ENCODE measurements at regions of chr7 and their contacts with region 1.

Region 1: GRCh38 chr7:35801392-35802101 is 690 bp downstream of the SEPTIN7 start:
- DNase-seq: peak; percentile 25 to 41
- ATAC-seq: peak; percentile 39 to 53
- H3K4me3 ChIP-seq: peak overlapping the region; percentile 86 to 96 (median 90)
- H3K27ac ChIP-seq: peak overlapping the region; percentile 92 to 96 (median 94)
- H3K4me1 ChIP-seq: peaks cover 23 to 28% of the 10 kb centered on the region in 2 donors
- H3K27me3 ChIP-seq: no peaks in the 10 kb centered on the region
- CTCF ChIP-seq: peak in 3 of 5 experiments; percentile 34 to 66 (median 64)
- POLR2A ChIP-seq: no peak

Region 2: GRCh38 chr7:35694781-35695472 is 106.6 kb before region 1 on chr7 and contains the start of gene HERPUD2:
- in situ Hi-C with region 1: loop called in 1 of 4 experiments (anchors 25 kb)
- intact Hi-C with region 1: loop called (anchors 1 kb)
- DNase-seq: peak; percentile 92 to 93
- ATAC-seq: peak; percentile 95
- H3K4me3 ChIP-seq: peak within 1 kb of the TSS; percentile 68 to 97 (median 89)
- H3K27ac ChIP-seq: peak within 1 kb of the TSS; percentile 92 to 98 (median 96)
- H3K4me1 ChIP-seq: peaks cover 45 to 47% of the 10 kb centered on the region in 2 donors
- H3K27me3 ChIP-seq: no peaks in the 10 kb centered on the region
- CTCF ChIP-seq: peak in 1 of 5 experiments; percentile 10
- POLR2A ChIP-seq: peak; percentile 85 to 92
- total RNA-seq, gene HERPUD2: 12.2 to 27.8 (median 24.7) TPM

Region 3: DNA sequence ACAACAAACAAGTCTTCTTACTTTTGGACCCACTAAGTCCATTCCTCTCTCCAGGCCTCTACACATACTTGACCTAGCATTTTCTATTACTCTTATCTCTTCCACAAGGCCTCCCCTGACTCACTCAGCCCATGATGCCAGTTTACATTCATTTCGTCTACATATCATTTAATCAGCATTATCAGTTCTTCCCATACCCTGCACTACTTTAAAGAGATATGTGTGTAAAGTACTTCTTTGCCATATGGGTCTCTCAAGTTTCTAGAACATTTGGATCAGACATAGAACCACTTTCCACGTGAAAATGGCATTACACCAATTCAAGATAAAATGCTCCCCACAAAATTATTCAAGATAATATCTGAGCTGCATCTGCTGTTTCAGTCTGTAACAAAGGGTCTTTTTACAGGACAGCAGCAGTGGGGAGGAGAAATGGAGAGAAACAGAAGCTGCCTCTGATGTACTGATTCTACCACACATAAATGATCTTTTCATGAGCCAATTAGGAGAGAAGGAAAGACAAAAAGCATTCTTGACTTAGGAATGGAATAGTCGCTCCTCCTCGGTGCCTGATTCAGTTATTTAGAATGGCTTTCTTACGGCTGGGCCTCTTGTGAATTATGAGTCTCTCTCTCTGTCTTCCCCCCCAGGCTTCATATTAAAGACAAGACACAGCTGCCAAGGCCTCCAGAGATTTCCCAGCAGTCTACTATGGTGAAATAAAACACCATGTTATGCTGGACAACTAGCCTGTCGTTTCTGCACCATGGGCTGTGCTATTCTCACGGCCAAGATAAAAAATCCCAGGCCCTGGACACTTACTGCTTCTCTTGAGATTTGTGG is 47.6 kb before region 1 on chr7:
- in situ Hi-C with region 1: no loop called
- intact Hi-C with region 1: loop called (anchors 5 kb)
- DNase-seq: peak; percentile 15 to 56
- ATAC-seq: peak; percentile 74 to 94
- H3K4me3 ChIP-seq: peak overlapping the region in 1 of 4 donors; percentile 4
- H3K27ac ChIP-seq: peak overlapping the region; percentile 64 to 78 (median 76)
- H3K4me1 ChIP-seq: peaks cover 21 to 34% of the 10 kb centered on the region in 2 donors
- H3K27me3 ChIP-seq: no peaks in the 10 kb centered on the region
- CTCF ChIP-seq: no peak
- POLR2A ChIP-seq: no peak

Region 4: GRCh38 chr7:35906191-35906908 is 104.8 kb after region 1 on chr7:
- in situ Hi-C with region 1: no loop called
- intact Hi-C with region 1: loop called (anchors 2 kb)
- DNase-seq: peak; percentile 30 to 44
- ATAC-seq: peak; percentile 90 to 95
- H3K4me3 ChIP-seq: no peak overlapping the region
- H3K27ac ChIP-seq: no peak overlapping the region
- H3K4me1 ChIP-seq: peaks cover 0 to 4% of the 10 kb centered on the region in 2 donors
- H3K27me3 ChIP-seq: no peaks in the 10 kb centered on the region
- CTCF ChIP-seq: peak; percentile 88 to 96 (median 94)
- POLR2A ChIP-seq: no peak

Region 5: DNA sequence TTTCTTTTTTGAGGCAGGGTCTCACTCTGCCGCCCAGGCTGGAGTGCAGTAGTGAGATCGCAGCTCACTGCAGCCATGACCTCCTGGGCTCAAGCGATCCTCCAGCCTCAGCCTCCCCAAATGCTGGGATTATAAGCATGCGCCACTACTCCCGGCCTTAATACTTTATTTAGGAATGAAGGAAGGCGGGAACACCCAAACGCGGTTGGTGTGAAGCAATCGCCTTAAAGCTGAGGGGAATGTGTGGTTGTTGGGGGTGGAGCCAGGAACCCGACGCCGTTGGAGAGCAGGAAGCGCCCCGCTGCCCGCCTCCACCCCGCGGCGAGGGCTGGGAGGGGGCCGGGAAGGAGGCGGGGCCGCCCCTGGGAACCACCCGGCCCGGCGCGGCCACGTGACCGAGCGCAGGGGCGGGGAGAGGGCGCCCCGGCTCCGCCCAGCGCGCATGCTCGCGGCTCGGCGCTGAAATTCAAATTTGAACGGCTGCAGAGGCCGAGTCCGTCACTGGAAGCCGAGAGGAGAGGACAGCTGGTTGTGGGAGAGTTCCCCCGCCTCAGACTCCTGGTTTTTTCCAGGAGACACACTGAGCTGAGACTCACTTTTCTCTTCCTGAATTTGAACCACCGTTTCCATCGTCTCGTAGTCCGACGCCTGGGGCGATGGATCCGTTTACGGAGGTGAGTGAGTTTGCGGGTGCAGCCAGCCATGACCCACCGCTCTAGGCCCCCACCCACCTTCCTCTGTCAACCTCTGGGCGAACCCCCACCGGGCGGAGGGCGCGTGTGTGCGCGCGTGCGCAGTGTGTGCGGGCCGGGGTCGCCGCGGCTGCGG is 588.0 kb after region 1 on chr7 and contains the start of gene ANLN:
- in situ Hi-C with region 1: no loop called
- intact Hi-C with region 1: loop called (anchors 2 kb)
- DNase-seq: peak; percentile 79 to 89
- ATAC-seq: peak; percentile 88 to 93
- H3K4me3 ChIP-seq: peak within 1 kb of the TSS; percentile 58 to 77 (median 65)
- H3K27ac ChIP-seq: peak within 1 kb of the TSS; percentile 66 to 82 (median 69)
- H3K4me1 ChIP-seq: peaks cover 14 to 19% of the 10 kb centered on the region in 2 donors
- H3K27me3 ChIP-seq: no peaks in the 10 kb centered on the region
- CTCF ChIP-seq: no peak
- POLR2A ChIP-seq: peak in 1 of 2 donors; percentile 9
- total RNA-seq, gene ANLN: 0.73 to 1.8 (median 1.3) TPM

Region 6: GRCh38 chr7:36563706-36564327 is 762.3 kb after region 1 on chr7:
- in situ Hi-C with region 1: no loop called
- intact Hi-C with region 1: no loop called
- DNase-seq: no peak
- ATAC-seq: no peak
- H3K4me3 ChIP-seq: no peak overlapping the region
- H3K27ac ChIP-seq: no peak overlapping the region
- H3K4me1 ChIP-seq: no peaks in the 10 kb centered on the region
- H3K27me3 ChIP-seq: no peaks in the 10 kb centered on the region
- CTCF ChIP-seq: no peak
- POLR2A ChIP-seq: no peak